Natural killer cell (primary cell): ENCODE measurements at regions of chr10 and their contacts with region 1.

Region 1: DNA sequence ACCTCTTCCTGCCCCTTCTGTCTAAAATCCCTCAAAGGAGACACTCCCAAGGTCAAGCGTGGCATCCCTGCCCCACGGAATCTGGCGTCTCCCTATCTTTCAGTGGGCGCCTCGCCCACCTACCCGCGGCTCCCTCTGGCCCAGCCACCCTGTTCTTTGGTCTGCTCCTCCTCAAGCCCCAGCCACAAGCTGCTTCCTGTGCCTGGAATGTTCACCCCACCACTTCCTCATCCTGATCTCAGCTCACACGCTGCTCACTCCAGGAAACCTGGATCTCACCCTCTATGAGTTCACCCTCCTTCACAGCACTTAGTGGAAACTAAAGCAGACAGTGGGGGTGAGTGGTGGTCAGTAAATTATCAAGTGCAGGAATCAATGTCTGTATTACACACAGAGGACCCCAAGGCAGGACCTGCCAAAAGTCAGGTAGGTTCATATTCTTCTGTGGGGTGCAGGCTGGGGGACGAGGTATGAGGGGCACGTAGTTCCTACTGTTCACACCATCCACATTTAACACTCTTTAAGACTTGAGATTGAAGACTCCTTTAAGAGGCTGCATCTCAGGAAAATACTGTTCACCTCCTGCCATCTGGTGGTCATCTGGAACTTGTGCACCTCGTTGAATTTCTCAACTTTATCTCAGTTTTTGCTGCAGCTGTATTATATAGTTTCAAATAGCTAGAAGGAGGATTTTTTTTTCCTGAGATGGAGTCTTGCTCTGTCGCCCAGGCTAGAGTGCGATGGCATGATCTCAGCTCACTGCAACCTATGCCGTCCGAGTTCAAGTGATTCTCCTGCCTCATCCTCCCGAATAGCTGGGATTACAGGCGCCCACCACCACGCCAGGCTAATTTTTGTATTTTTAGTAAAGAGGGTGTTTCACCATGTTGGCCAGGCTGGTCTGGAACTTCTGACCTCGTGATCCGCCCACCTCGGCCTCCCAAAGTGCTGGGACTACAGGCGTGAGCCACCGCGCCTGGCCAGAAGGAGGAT is 166.6 kb downstream of the ARHGAP21 start:
- DNase-seq: peak in 1 of 2 donors; percentile 59
- ATAC-seq: peak in 2 of 3 donors; percentile 39 to 50
- H3K4me3 ChIP-seq: no peak overlapping the region
- H3K4me3 Mint-ChIP-seq: no peak overlapping the region
- H3K27ac ChIP-seq: no peak overlapping the region
- H3K27ac Mint-ChIP-seq: no peak overlapping the region
- H3K4me1 ChIP-seq: no peaks in the 10 kb centered on the region
- H3K4me1 Mint-ChIP-seq: peaks cover 6 to 13% of the 10 kb centered on the region in 2 donors
- H3K27me3 ChIP-seq: no peaks in the 10 kb centered on the region
- H3K27me3 Mint-ChIP-seq: peaks cover 6 to 7% of the 10 kb centered on the region in 2 donors
- CTCF ChIP-seq: peak; percentile 58

Region 2: GRCh38 chr10:23158370-23158769 is 1398.7 kb before region 1 on chr10:
- intact Hi-C with region 1: loop called (anchors 5 kb)
- DNase-seq: peak in 1 of 2 donors; percentile 68
- ATAC-seq: peak; percentile 26 to 64 (median 54)
- H3K4me3 ChIP-seq: no peak overlapping the region
- H3K4me3 Mint-ChIP-seq: no peak overlapping the region
- H3K27ac ChIP-seq: no peak overlapping the region
- H3K27ac Mint-ChIP-seq: no peak overlapping the region
- H3K4me1 ChIP-seq: no peaks in the 10 kb centered on the region
- H3K4me1 Mint-ChIP-seq: no peaks in the 10 kb centered on the region
- H3K27me3 ChIP-seq: peaks cover 4% of the 10 kb centered on the region
- H3K27me3 Mint-ChIP-seq: peaks cover 19 to 49% of the 10 kb centered on the region in 2 donors
- CTCF ChIP-seq: peak; percentile 74

Region 3: DNA sequence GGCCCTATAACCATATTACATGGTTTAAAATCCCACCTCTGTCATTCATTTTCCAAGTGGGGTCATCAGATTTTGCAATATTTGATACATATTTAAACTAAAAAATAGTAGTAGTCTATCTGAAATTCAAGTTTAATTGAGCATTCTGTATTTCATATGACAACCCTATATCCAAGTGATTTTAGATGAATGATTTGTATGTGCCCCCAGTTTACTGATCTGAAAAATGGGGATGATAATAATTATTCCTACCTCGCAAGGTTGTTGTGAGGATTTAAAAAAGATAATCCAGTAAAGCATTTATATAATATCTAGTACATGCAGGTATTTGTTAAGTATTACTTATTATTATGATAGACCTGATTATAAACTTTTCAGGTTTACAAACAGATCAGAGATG is 82.1 kb after region 1 on chr10:
- intact Hi-C with region 1: no loop called
- DNase-seq: no peak
- ATAC-seq: no peak
- H3K4me3 ChIP-seq: no peak overlapping the region
- H3K4me3 Mint-ChIP-seq: no peak overlapping the region
- H3K27ac ChIP-seq: no peak overlapping the region
- H3K27ac Mint-ChIP-seq: no peak overlapping the region
- H3K4me1 ChIP-seq: no peaks in the 10 kb centered on the region
- H3K4me1 Mint-ChIP-seq: no peaks in the 10 kb centered on the region
- H3K27me3 ChIP-seq: no peaks in the 10 kb centered on the region
- H3K27me3 Mint-ChIP-seq: no peaks in the 10 kb centered on the region
- CTCF ChIP-seq: no peak